ENCODE measurements at regions of chr11 and their contacts with region 1.

Region 1: GRCh38 chr11:46616998-46617675 is at the starts of genes ATG13 and HARBI1:
- DNase-seq: peak; percentile 95
- ATAC-seq: peak; percentile 96
- H3K4me3 Mint-ChIP-seq: peak within 1 kb of the TSS; percentile 89
- H3K27ac Mint-ChIP-seq: peak within 1 kb of the TSS; percentile 100
- H3K4me1 Mint-ChIP-seq: peaks cover 31% of the 10 kb centered on the region
- H3K27me3 Mint-ChIP-seq: no peaks in the 10 kb centered on the region
- total RNA-seq, gene ATG13: 39.4 to 56.4 TPM
- total RNA-seq, gene HARBI1: 2.3 to 2.7 TPM

Region 2: GRCh38 chr11:46121724-46122477 is 495.2 kb before region 1 on chr11:
- CTCF ChIA-PET with region 1: no interaction called
- POLR2A ChIA-PET with region 1: no interaction called
- intact Hi-C with region 1: loop called in 1 of 2 experiments (anchors 2 kb)
- DNase-seq: peak; percentile 83
- ATAC-seq: peak; percentile 39
- H3K4me3 Mint-ChIP-seq: peak overlapping the region; percentile 81
- H3K27ac Mint-ChIP-seq: peak overlapping the region; percentile 86
- H3K4me1 Mint-ChIP-seq: peaks cover 41% of the 10 kb centered on the region
- H3K27me3 Mint-ChIP-seq: no peaks in the 10 kb centered on the region

Region 3: GRCh38 chr11:46489661-46490560 is 127.2 kb before region 1 on chr11:
- CTCF ChIA-PET with region 1: interaction called, 15 read pairs
- POLR2A ChIA-PET with region 1: no interaction called
- intact Hi-C with region 1: loop called in 1 of 2 experiments (anchors 1 kb)
- DNase-seq: peak; percentile 51
- ATAC-seq: peak; percentile 60
- H3K4me3 Mint-ChIP-seq: no peak overlapping the region
- H3K27ac Mint-ChIP-seq: no peak overlapping the region
- H3K4me1 Mint-ChIP-seq: peaks cover 4% of the 10 kb centered on the region
- H3K27me3 Mint-ChIP-seq: no peaks in the 10 kb centered on the region

Region 4: DNA sequence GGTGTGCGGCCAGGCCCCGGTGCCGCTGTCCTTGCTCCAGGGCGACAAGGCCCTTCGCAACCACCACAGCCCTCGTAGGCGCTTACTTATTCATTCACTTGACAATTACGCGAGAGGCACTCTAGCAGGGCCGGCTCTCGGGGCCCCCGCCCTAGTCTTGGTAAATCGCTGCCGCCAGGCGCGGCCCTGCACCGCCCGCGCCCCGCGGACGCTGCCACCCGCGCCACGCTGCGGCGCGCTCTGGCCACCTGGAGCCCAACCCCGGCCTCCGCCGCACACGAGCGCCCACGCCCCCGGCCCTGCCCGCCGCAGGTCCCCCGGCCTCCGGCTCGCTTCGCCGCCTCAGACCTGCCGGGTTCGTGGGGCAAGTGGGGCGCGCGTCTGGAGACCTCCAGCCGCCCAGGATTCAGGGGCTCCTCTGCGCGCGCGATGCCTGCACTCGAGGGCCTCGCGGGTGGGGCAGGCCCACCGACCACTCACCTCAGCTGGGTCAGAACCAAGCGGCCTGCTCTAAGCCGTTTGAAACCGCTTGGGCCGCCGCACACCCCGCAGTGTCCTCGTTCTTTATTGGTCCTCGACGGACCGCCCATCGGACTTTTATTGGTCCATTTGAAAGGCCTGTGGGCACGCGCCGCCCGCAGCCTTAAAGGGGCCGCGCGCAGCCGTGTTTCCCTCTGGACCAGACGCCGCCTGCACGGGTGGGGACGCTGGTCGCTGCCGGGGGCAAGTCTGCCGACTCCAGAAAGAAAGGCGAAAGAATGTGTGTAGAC is 228.8 kb after region 1 on chr11 and contains the start of gene CKAP5:
- CTCF ChIA-PET with region 1: no interaction called
- POLR2A ChIA-PET with region 1: no interaction called
- intact Hi-C with region 1: loop called in 1 of 2 experiments (anchors 1 kb)
- DNase-seq: peak; percentile 92
- ATAC-seq: peak; percentile 92
- H3K4me3 Mint-ChIP-seq: peak within 1 kb of the TSS; percentile 86
- H3K27ac Mint-ChIP-seq: peak within 1 kb of the TSS; percentile 94
- H3K4me1 Mint-ChIP-seq: peaks cover 30% of the 10 kb centered on the region
- H3K27me3 Mint-ChIP-seq: no peaks in the 10 kb centered on the region
- total RNA-seq, gene CKAP5: 166 to 183 TPM

Region 5: GRCh38 chr11:47269002-47269828 is 652.1 kb after region 1 on chr11:
- CTCF ChIA-PET with region 1: no interaction called
- POLR2A ChIA-PET with region 1: no interaction called
- intact Hi-C with region 1: loop called in 1 of 2 experiments (anchors 1 kb)
- DNase-seq: peak; percentile 93
- ATAC-seq: peak; percentile 61
- H3K4me3 Mint-ChIP-seq: peak overlapping the region; percentile 76
- H3K27ac Mint-ChIP-seq: peak overlapping the region; percentile 98
- H3K4me1 Mint-ChIP-seq: peaks cover 60% of the 10 kb centered on the region
- H3K27me3 Mint-ChIP-seq: no peaks in the 10 kb centered on the region

Region 6: GRCh38 chr11:47847892-47848635 is 1230.9 kb after region 1 on chr11 and contains the start of gene NUP160:
- CTCF ChIA-PET with region 1: no interaction called
- POLR2A ChIA-PET with region 1: no interaction called
- intact Hi-C with region 1: loop called in 1 of 2 experiments (anchors 5 kb)
- DNase-seq: peak; percentile 94
- ATAC-seq: peak; percentile 88
- H3K4me3 Mint-ChIP-seq: peak within 1 kb of the TSS; percentile 90
- H3K27ac Mint-ChIP-seq: peak within 1 kb of the TSS; percentile 99
- H3K4me1 Mint-ChIP-seq: peaks cover 44% of the 10 kb centered on the region
- H3K27me3 Mint-ChIP-seq: no peaks in the 10 kb centered on the region
- total RNA-seq, gene NUP160: 67.1 to 84.5 TPM